B cell (primary cell): ENCODE measurements at regions of chr15 and their contacts with region 1.

Region 1: GRCh38 chr15:45166834-45167630 is 20.7 kb downstream of the SHF start:
- DNase-seq: peak; percentile 89
- ATAC-seq: peak; percentile 94
- H3K4me3 ChIP-seq: peak overlapping the region; percentile 45 to 84 (median 81)
- H3K4me3 Mint-ChIP-seq: peak overlapping the region; percentile 80
- H3K27ac ChIP-seq: peak overlapping the region; percentile 89 to 96
- H3K27ac Mint-ChIP-seq: peak overlapping the region; percentile 92
- H3K4me1 ChIP-seq: peaks cover 12 to 46% of the 10 kb centered on the region in 2 donors
- H3K4me1 Mint-ChIP-seq: peaks cover 31% of the 10 kb centered on the region
- H3K27me3 ChIP-seq: no peaks in the 10 kb centered on the region
- H3K27me3 Mint-ChIP-seq: no peaks in the 10 kb centered on the region
- CTCF ChIP-seq: peak; percentile 75

Region 2: DNA sequence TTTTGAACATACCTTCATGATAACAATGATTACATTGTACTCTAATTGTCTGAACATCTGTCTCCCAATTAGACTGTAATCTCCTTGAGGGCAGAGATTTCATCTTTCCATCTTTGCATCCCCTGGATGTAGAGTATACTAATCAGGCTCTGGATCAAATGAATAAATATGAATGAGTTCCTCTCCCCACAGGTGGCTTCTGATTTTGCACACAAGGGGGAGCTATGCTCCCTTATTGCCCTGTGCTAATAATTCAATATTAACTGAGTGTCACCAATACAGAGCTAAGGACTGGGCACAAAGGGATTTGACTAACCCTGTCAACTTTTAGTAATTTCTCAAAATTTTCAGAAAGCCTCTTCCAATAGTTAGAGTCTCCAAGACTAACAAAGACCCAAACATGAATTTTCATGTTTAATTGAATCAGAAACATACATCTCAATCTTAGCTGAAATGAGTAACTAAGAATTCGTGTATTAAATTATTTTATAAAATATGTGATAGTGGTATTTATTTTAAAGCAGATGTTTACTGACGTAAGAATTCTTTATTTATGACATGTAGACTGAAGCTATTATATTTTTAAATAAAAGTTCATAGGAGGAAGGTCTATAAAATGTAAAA is 40.4 kb before region 1 on chr15:
- CTCF ChIA-PET with region 1: interaction called, 13 read pairs
- POLR2A ChIA-PET with region 1: no interaction called
- intact Hi-C with region 1: loop called (anchors 1 kb)
- DNase-seq: peak; percentile 70
- ATAC-seq: peak; percentile 59
- H3K4me3 ChIP-seq: no peak overlapping the region
- H3K4me3 Mint-ChIP-seq: no peak overlapping the region
- H3K27ac ChIP-seq: no peak overlapping the region
- H3K27ac Mint-ChIP-seq: no peak overlapping the region
- H3K4me1 ChIP-seq: peaks cover 15 to 22% of the 10 kb centered on the region in 2 donors
- H3K4me1 Mint-ChIP-seq: peaks cover 8% of the 10 kb centered on the region
- H3K27me3 ChIP-seq: peaks cover 0 to 55% (median 28%) of the 10 kb centered on the region in 4 experiments
- H3K27me3 Mint-ChIP-seq: peaks cover 60% of the 10 kb centered on the region
- CTCF ChIP-seq: peak; percentile 93

Region 3: GRCh38 chr15:45179221-45179985 is 12.4 kb after region 1 on chr15:
- CTCF ChIA-PET with region 1: interaction called, 37 read pairs
- POLR2A ChIA-PET with region 1: no interaction called
- intact Hi-C with region 1: no loop called
- DNase-seq: peak; percentile 60
- ATAC-seq: peak; percentile 51
- H3K4me3 ChIP-seq: no peak overlapping the region
- H3K4me3 Mint-ChIP-seq: no peak overlapping the region
- H3K27ac ChIP-seq: no peak overlapping the region
- H3K27ac Mint-ChIP-seq: no peak overlapping the region
- H3K4me1 ChIP-seq: no peaks in the 10 kb centered on the region
- H3K4me1 Mint-ChIP-seq: peaks cover 2% of the 10 kb centered on the region
- H3K27me3 ChIP-seq: no peaks in the 10 kb centered on the region
- H3K27me3 Mint-ChIP-seq: peaks cover 7% of the 10 kb centered on the region
- CTCF ChIP-seq: peak; percentile 54

Region 4: GRCh38 chr15:45205192-45205591 is 38.2 kb after region 1 on chr15:
- CTCF ChIA-PET with region 1: interaction called, 79 read pairs
- POLR2A ChIA-PET with region 1: interaction called, 28 read pairs
- intact Hi-C with region 1: loop called (anchors 1 kb)
- DNase-seq: peak; percentile 61
- ATAC-seq: no peak
- H3K4me3 ChIP-seq: no peak overlapping the region
- H3K4me3 Mint-ChIP-seq: no peak overlapping the region
- H3K27ac ChIP-seq: no peak overlapping the region
- H3K27ac Mint-ChIP-seq: no peak overlapping the region
- H3K4me1 ChIP-seq: peaks cover 6 to 8% of the 10 kb centered on the region in 2 donors
- H3K4me1 Mint-ChIP-seq: no peaks in the 10 kb centered on the region
- H3K27me3 ChIP-seq: peaks cover 0 to 3% (median 0%) of the 10 kb centered on the region in 4 experiments
- H3K27me3 Mint-ChIP-seq: peaks cover 24% of the 10 kb centered on the region
- CTCF ChIP-seq: peak; percentile 67

Region 5: GRCh38 chr15:45279024-45279698 is 112.1 kb after region 1 on chr15:
- CTCF ChIA-PET with region 1: interaction called, 8 read pairs
- POLR2A ChIA-PET with region 1: interaction called, 4 read pairs
- intact Hi-C with region 1: loop called (anchors 1 kb)
- DNase-seq: peak; percentile 97
- ATAC-seq: peak; percentile 99
- H3K4me3 ChIP-seq: peak overlapping the region; percentile 58 to 88 (median 69)
- H3K4me3 Mint-ChIP-seq: peak overlapping the region; percentile 94
- H3K27ac ChIP-seq: peak overlapping the region; percentile 66 to 68
- H3K27ac Mint-ChIP-seq: peak overlapping the region; percentile 88
- H3K4me1 ChIP-seq: peaks cover 12 to 16% of the 10 kb centered on the region in 2 donors
- H3K4me1 Mint-ChIP-seq: peaks cover 13% of the 10 kb centered on the region
- H3K27me3 ChIP-seq: peaks cover 0 to 5% (median 0%) of the 10 kb centered on the region in 4 experiments
- H3K27me3 Mint-ChIP-seq: peaks cover 9% of the 10 kb centered on the region
- CTCF ChIP-seq: no peak